ENCODE measurements at regions of chr6 and their contacts with region 1.

Region 1: GRCh38 chr6:42928986-42929820 is at the start of gene CNPY3:
- DNase-seq: peak; percentile 80 to 96 (median 95)
- ATAC-seq: peak; percentile 90
- H3K4me3 ChIP-seq: peak within 1 kb of the TSS; percentile 80
- H3K4me3 Mint-ChIP-seq: peak within 1 kb of the TSS; percentile 86 to 99 (median 98)
- H3K27ac ChIP-seq: peak within 1 kb of the TSS; percentile 95
- H3K27ac Mint-ChIP-seq: peak within 1 kb of the TSS; percentile 96 to 100 (median 99)
- H3K4me1 ChIP-seq: peaks cover 33% of the 10 kb centered on the region in 2 donors
- H3K4me1 Mint-ChIP-seq: peaks cover 34 to 53% (median 43%) of the 10 kb centered on the region in 7 donors
- H3K27me3 ChIP-seq: no peaks in the 10 kb centered on the region
- H3K27me3 Mint-ChIP-seq: no peaks in the 10 kb centered on the region
- total RNA-seq, gene CNPY3: 58.6 to 98.9 (median 87.4) TPM

Region 2: GRCh38 chr6:41247288-41247865 is 1681.8 kb before region 1 on chr6:
- CTCF ChIA-PET with region 1: no interaction called
- POLR2A ChIA-PET with region 1: no interaction called
- intact Hi-C with region 1: no loop called
- DNase-seq: no peak
- ATAC-seq: no peak
- H3K4me3 ChIP-seq: no peak overlapping the region
- H3K4me3 Mint-ChIP-seq: peak overlapping the region in 1 of 10 donors; percentile 19
- H3K27ac ChIP-seq: no peak overlapping the region
- H3K27ac Mint-ChIP-seq: peak overlapping the region in 2 of 9 donors; percentile 7 to 62
- H3K4me1 ChIP-seq: no peaks in the 10 kb centered on the region
- H3K4me1 Mint-ChIP-seq: peaks cover 0 to 30% (median 15%) of the 10 kb centered on the region in 7 donors
- H3K27me3 ChIP-seq: no peaks in the 10 kb centered on the region
- H3K27me3 Mint-ChIP-seq: peaks cover 0 to 39% (median 0%) of the 10 kb centered on the region in 5 donors

Region 3: DNA sequence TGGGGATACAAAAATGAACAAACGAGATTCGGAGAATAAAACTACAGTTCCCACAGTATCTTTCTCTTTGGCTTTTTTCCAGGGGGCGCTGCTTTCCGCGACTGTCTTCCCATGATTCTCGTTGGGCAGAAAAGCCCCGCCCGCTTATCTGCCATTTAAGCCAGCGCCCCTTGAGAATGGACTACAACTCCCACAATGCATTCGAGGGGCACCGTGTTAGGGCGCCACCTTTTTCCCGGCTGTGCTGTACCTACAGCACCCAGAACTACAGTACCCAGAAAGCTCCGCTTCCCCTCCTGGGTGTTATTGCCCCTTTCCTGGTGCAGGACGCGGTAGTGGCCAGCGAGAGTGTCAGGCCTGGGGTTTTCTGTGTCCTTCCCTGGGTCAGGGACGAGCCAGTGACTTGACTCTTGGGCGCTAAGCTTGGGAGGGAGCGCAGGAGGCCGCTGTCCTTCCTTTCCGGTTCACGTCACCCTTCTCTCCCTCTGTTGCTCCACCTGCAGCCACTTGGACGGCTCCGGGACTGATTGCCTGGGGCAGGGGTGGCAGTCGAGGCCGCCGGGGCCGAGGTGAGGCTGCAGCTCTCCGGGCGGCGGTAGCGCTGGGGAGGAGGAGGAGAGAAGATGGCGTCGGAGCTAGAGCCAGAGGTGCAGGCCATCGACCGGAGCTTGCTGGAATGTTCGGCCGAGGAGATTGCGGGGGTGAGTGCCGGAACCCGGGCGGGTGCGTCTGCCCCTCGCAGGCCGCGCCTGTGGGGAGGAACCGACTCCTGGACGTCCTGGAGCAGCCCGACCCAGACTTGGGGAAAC is 365.3 kb before region 1 on chr6 and contains the start of gene UBR2:
- CTCF ChIA-PET with region 1: no interaction called
- POLR2A ChIA-PET with region 1: interaction called, 3 read pairs
- intact Hi-C with region 1: loop called in 1 of 2 experiments (anchors 1 kb)
- DNase-seq: peak; percentile 67 to 97 (median 93)
- ATAC-seq: peak; percentile 99
- H3K4me3 ChIP-seq: peak within 1 kb of the TSS; percentile 92
- H3K4me3 Mint-ChIP-seq: peak within 1 kb of the TSS; percentile 94 to 100 (median 96)
- H3K27ac ChIP-seq: peak within 1 kb of the TSS; percentile 95
- H3K27ac Mint-ChIP-seq: peak within 1 kb of the TSS; percentile 89 to 98 (median 93)
- H3K4me1 ChIP-seq: peaks cover 7 to 12% of the 10 kb centered on the region in 2 donors
- H3K4me1 Mint-ChIP-seq: peaks cover 17 to 43% (median 29%) of the 10 kb centered on the region in 7 donors
- H3K27me3 ChIP-seq: no peaks in the 10 kb centered on the region
- H3K27me3 Mint-ChIP-seq: peaks cover 0 to 7% (median 0%) of the 10 kb centered on the region in 5 donors
- total RNA-seq, gene UBR2: 35.6 to 45.5 (median 38.9) TPM

Region 4: DNA sequence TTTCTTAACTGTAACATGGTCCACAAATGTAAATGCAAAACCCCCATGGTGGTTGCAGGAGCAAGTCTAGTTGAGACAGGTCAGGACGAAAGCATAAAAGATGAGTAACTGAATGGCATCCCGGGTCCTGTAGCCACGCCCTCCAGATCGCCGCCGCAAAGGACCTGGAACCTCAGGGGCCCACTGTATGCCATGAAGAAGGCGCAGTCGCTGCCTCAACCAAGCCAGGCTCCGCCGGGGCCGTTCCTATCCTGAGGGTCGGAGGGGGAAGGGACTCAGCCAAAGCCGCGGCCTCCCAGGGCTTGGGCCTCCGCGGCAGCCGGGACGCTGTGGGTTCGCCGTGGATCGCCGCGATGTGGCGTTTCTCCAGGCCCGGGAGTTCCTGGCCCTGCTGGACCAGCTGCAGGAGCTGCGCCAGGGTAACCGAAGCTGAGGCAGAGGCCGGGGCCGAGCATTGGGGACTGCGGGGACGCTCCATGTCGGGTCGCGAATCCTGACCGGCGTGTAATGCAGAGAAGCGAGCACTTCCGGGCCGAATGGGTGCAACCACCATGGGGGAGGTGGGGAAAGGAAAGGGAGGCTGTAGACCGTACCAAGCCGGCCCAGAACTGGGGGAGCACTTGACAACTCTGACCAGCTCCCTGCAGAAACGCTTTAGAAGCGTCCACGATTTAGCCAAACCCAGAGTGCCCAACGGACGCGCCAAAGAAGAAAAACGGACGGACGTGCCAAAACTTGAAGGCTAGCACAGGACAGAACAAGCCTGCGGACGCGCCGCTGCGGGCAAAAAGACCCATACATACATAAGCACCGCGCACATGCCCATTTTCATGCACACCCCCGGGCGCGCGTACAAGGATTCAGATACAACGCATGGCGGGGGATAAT is 38.6 kb before region 1 on chr6:
- CTCF ChIA-PET with region 1: no interaction called
- POLR2A ChIA-PET with region 1: interaction called, 8 read pairs
- intact Hi-C with region 1: loop called (anchors 1 to 5 kb)
- DNase-seq: peak; percentile 70 to 90 (median 87)
- ATAC-seq: peak; percentile 99
- H3K4me3 ChIP-seq: peak overlapping the region; percentile 89
- H3K4me3 Mint-ChIP-seq: peak overlapping the region; percentile 94 to 100 (median 98)
- H3K27ac ChIP-seq: peak overlapping the region; percentile 87
- H3K27ac Mint-ChIP-seq: peak overlapping the region; percentile 89 to 99 (median 98)
- H3K4me1 ChIP-seq: peaks cover 0 to 8% of the 10 kb centered on the region in 2 donors
- H3K4me1 Mint-ChIP-seq: peaks cover 0 to 26% (median 14%) of the 10 kb centered on the region in 7 donors
- H3K27me3 ChIP-seq: no peaks in the 10 kb centered on the region
- H3K27me3 Mint-ChIP-seq: no peaks in the 10 kb centered on the region

Region 5: DNA sequence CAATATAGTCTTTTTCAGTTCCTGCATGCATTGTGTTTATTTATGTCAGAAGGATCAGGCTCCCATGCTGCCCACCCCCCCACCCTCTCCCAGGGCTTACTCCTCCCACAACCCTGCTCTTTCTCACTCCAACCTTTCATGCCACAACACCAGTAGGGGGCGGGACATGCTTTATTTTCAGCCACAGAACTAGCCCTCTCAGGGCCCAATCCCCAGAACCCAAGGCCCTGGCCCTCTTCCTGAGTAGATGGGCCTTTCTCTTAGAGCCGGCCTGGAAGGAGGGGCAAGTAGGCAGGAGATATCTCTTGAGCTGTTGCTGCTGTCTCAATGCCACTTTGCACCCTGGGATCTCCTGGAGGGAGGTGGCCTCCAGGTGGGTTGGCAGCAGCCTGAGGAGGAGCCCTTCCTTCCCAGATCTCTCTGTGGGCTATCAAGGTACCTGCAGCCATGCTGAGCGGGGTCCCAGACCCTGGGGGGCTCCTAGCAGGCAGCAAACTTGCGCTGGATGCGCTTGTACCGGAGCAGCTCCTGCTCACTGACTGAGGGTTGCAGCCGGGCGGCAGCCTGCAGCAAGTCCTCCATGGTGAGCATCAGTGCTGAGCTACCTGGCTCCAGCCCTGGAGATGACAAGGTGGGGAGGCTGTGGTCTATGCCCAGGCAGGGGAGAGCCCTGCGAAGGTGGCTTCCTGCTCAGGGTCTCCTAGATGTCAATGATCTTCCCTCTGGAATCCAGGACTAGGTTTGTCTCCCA is 34.8 kb after region 1 on chr6:
- CTCF ChIA-PET with region 1: no interaction called
- POLR2A ChIA-PET with region 1: interaction called, 3 read pairs
- intact Hi-C with region 1: loop called in 1 of 2 experiments (anchors 1 kb)
- DNase-seq: peak in 5 of 9 donors; percentile 14 to 46 (median 23)
- ATAC-seq: peak; percentile 43
- H3K4me3 ChIP-seq: no peak overlapping the region
- H3K4me3 Mint-ChIP-seq: no peak overlapping the region
- H3K27ac ChIP-seq: no peak overlapping the region
- H3K27ac Mint-ChIP-seq: no peak overlapping the region
- H3K4me1 ChIP-seq: peaks cover 0 to 5% of the 10 kb centered on the region in 2 donors
- H3K4me1 Mint-ChIP-seq: peaks cover 0 to 24% (median 16%) of the 10 kb centered on the region in 7 donors
- H3K27me3 ChIP-seq: no peaks in the 10 kb centered on the region
- H3K27me3 Mint-ChIP-seq: peaks cover 0 to 18% (median 0%) of the 10 kb centered on the region in 5 donors

Region 6: GRCh38 chr6:43053545-43054205 is 124.5 kb after region 1 on chr6 and contains the start of gene CUL7:
- CTCF ChIA-PET with region 1: interaction called, 3 read pairs
- POLR2A ChIA-PET with region 1: interaction called, 34 read pairs
- intact Hi-C with region 1: loop called (anchors 1 kb)
- DNase-seq: peak; percentile 72 to 90 (median 88)
- ATAC-seq: peak; percentile 99
- H3K4me3 ChIP-seq: peak within 1 kb of the TSS; percentile 70
- H3K4me3 Mint-ChIP-seq: peak within 1 kb of the TSS; percentile 86 to 99 (median 94)
- H3K27ac ChIP-seq: peak within 1 kb of the TSS; percentile 89
- H3K27ac Mint-ChIP-seq: peak within 1 kb of the TSS; percentile 92 to 99 (median 97)
- H3K4me1 ChIP-seq: peaks cover 8 to 24% of the 10 kb centered on the region in 2 donors
- H3K4me1 Mint-ChIP-seq: peaks cover 37 to 58% (median 50%) of the 10 kb centered on the region in 7 donors
- H3K27me3 ChIP-seq: no peaks in the 10 kb centered on the region
- H3K27me3 Mint-ChIP-seq: no peaks in the 10 kb centered on the region
- total RNA-seq, gene CUL7: 9.8 to 14.5 (median 12.7) TPM

Region 7: GRCh38 chr6:43369174-43370022 is 440.2 kb after region 1 on chr6 and contains the start of gene ZNF318:
- CTCF ChIA-PET with region 1: no interaction called
- POLR2A ChIA-PET with region 1: interaction called, 4 read pairs
- intact Hi-C with region 1: loop called in 1 of 2 experiments (anchors 1 kb)
- DNase-seq: peak; percentile 85 to 95 (median 93)
- ATAC-seq: peak; percentile 97
- H3K4me3 ChIP-seq: peak within 1 kb of the TSS; percentile 90
- H3K4me3 Mint-ChIP-seq: peak within 1 kb of the TSS; percentile 75 to 97 (median 92)
- H3K27ac ChIP-seq: peak within 1 kb of the TSS; percentile 87
- H3K27ac Mint-ChIP-seq: peak within 1 kb of the TSS; percentile 91 to 98 (median 95)
- H3K4me1 ChIP-seq: peaks cover 20 to 23% of the 10 kb centered on the region in 2 donors
- H3K4me1 Mint-ChIP-seq: peaks cover 28 to 56% (median 50%) of the 10 kb centered on the region in 7 donors
- H3K27me3 ChIP-seq: no peaks in the 10 kb centered on the region
- H3K27me3 Mint-ChIP-seq: peaks cover 0 to 17% (median 0%) of the 10 kb centered on the region in 5 donors
- total RNA-seq, gene ZNF318: 15.8 to 40.2 (median 28.3) TPM

Region 8: DNA sequence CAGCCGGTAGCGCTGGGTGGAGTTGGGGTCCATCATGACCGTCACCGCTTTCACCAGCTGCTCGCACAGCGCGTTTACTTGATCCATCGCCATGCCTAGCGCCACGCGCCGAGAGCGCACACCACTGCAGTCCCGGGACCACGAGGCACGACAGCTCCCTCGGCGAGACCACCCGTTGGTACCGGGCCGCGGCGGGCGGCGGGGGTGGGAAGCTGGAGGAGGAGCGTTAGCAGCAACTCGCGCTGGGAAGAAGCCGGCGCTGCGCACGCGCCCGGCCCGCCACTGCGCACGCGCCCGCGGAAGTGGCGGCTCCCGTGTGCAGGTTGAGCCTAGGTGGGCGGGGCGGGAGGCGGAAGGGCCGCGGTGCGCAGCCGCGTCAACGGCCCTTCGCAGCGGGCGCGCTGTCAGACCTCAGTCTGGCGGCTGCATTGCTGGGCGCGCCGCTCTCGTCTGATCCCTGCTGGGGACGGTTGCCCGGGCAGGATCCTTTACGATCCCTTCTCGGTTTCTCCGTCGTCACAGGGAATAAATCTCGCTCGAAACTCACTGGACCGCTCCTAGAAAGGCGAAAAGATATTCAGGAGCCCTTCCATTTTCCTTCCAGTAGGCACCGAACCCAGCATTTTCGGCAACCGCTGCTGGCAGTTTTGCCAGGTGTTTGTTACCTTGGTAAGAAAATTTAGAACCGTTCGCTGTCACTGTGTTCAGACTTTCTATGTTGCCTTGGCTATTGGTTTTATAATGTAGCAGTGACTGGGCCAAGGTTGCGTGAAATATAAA is 646.8 kb after region 1 on chr6 and contains the starts of genes POLH and XPO5:
- CTCF ChIA-PET with region 1: no interaction called
- POLR2A ChIA-PET with region 1: no interaction called
- intact Hi-C with region 1: loop called in 1 of 2 experiments (anchors 2 kb)
- DNase-seq: peak; percentile 83 to 94 (median 88)
- ATAC-seq: peak; percentile 99
- H3K4me3 ChIP-seq: peak within 1 kb of the TSS; percentile 77
- H3K4me3 Mint-ChIP-seq: peak within 1 kb of the TSS; percentile 90 to 100 (median 98)
- H3K27ac ChIP-seq: peak within 1 kb of the TSS; percentile 89
- H3K27ac Mint-ChIP-seq: peak within 1 kb of the TSS; percentile 78 to 94 (median 92)
- H3K4me1 ChIP-seq: peaks cover 20 to 21% of the 10 kb centered on the region in 2 donors
- H3K4me1 Mint-ChIP-seq: peaks cover 21 to 61% (median 40%) of the 10 kb centered on the region in 7 donors
- H3K27me3 ChIP-seq: no peaks in the 10 kb centered on the region
- H3K27me3 Mint-ChIP-seq: no peaks in the 10 kb centered on the region
- total RNA-seq, gene POLH: 9.1 to 65.6 (median 19.3) TPM
- total RNA-seq, gene XPO5: 35.0 to 107 (median 41.9) TPM

Region 9: DNA sequence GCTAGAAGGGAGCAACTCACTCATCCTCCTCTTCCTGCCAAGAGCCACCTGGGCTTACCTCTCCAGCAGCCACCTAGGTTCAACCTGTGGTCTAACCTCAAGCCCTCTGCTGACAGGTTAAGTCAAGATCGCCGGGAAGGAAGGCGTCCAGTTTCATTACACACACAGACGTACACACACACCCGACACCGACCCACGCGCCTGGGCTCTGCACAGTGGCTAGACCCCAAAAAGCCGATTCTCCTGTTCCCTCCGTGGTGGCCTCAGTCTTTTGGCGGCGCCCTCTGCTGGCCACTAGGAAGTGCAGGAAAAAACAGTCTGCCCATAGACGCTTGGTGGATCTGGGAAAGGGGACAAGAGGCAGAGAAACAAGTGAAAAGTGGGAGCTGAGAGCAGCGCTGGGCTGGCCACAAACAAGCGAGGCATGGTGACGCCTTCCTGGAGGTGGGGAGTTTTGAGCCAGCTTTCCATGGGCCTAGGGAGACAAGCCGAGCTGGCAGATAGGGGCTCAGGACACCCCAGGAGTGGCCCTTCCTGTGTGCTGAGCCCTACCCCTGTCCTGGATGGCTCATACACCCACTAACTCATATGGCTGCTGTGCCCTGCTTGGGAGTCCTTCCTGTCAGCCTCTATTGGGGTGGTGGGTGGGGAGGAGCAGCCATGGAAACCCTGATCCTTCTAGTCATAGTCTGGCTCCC is 1145.4 kb after region 1 on chr6:
- CTCF ChIA-PET with region 1: no interaction called
- POLR2A ChIA-PET with region 1: no interaction called
- intact Hi-C with region 1: no loop called
- DNase-seq: peak; percentile 44 to 75 (median 63)
- ATAC-seq: peak; percentile 62
- H3K4me3 ChIP-seq: peak overlapping the region; percentile 65
- H3K4me3 Mint-ChIP-seq: peak overlapping the region; percentile 71 to 98 (median 84)
- H3K27ac ChIP-seq: no peak overlapping the region
- H3K27ac Mint-ChIP-seq: peak overlapping the region in 5 of 9 donors; percentile 2 to 80 (median 19)
- H3K4me1 ChIP-seq: peaks cover 12 to 16% of the 10 kb centered on the region in 2 donors
- H3K4me1 Mint-ChIP-seq: peaks cover 0 to 36% (median 15%) of the 10 kb centered on the region in 7 donors
- H3K27me3 ChIP-seq: no peaks in the 10 kb centered on the region
- H3K27me3 Mint-ChIP-seq: peaks cover 0 to 23% (median 12%) of the 10 kb centered on the region in 5 donors